Activated naive CD4-positive, alpha-beta T cell treated with anti-CD3 and anti-CD28 coated beads for 36 hours (primary cell): ENCODE measurements at regions of chr19 and their contacts with region 1.

Region 1: GRCh38 chr19:55258828-55259539 is at the start of gene PPP6R1:
- DNase-seq: peak; percentile 95
- H3K4me3 Mint-ChIP-seq: peak within 1 kb of the TSS; percentile 88
- H3K27ac Mint-ChIP-seq: peak within 1 kb of the TSS; percentile 99
- H3K4me1 Mint-ChIP-seq: peaks cover 16% of the 10 kb centered on the region
- H3K27me3 Mint-ChIP-seq: no peaks in the 10 kb centered on the region
- total RNA-seq, gene PPP6R1: 166 to 174 TPM

Region 2: DNA sequence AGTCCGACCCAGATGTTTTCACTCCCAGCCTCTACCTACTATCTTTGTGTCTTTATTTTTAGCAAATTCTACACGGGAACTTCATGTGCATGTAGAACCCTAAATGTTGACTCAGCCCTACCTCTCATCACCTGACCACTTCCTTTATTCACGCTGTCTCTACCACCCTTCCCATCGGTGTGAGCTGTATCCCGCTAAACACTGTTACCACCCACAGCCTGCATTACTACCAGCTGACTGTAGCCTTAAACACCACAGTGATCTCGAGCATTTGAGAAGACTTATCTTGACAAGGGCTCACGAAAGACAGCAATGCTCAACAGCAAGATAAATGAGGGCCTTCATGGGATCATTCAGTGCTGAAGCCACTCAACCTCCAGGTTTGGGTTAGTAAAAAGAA is 337.9 kb before region 1 on chr19:
- CTCF ChIA-PET with region 1: no interaction called
- intact Hi-C with region 1: no loop called
- DNase-seq: no peak
- H3K4me3 Mint-ChIP-seq: no peak overlapping the region
- H3K27ac Mint-ChIP-seq: no peak overlapping the region
- H3K4me1 Mint-ChIP-seq: no peaks in the 10 kb centered on the region
- H3K27me3 Mint-ChIP-seq: peaks cover 5% of the 10 kb centered on the region

Region 3: DNA sequence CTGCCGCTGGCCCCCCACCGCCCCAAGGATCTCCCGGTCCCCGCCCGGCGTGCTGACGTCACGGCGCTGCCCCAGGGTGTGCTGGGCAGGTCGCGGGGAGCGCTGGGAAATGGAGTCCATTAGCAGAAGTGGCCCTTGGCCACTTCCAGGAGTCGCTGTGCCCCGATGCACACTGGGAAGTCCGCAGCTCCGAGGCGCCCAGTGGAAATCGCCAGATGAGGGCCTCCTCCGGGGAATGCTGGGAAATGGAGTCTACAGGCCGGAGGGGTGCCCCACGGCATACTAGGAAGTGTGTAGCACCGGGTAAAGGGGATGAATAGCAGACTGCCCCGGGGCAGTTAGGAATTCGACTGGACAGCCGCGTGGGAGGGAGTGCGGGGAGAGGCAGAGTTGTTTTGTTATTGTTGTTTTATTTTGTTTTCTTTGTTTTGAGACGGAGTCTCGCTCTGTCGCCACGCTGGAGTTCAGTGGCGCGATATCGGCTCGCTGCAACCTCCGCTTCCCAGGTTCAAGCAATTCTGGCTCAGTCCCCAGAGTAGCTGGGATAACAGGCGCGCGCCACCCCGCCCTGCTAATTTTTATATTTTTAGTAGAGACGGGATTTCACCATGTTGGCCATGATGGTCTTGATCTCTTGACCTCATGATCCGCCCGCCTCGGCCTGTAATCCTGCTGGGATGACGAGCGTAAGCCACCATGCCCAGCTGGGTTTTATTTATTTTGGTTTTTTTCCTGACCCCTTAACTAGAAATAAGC is 141.2 kb before region 1 on chr19 and contains the start of gene PPP1R12C:
- CTCF ChIA-PET with region 1: interaction called, 3 read pairs
- intact Hi-C with region 1: loop called (anchors 1 kb)
- DNase-seq: peak; percentile 99
- H3K4me3 Mint-ChIP-seq: peak within 1 kb of the TSS; percentile 98
- H3K27ac Mint-ChIP-seq: peak within 1 kb of the TSS; percentile 90
- H3K4me1 Mint-ChIP-seq: peaks cover 23% of the 10 kb centered on the region
- H3K27me3 Mint-ChIP-seq: peaks cover 2% of the 10 kb centered on the region
- total RNA-seq, gene PPP1R12C: 41.2 to 42.1 TPM

Region 4: DNA sequence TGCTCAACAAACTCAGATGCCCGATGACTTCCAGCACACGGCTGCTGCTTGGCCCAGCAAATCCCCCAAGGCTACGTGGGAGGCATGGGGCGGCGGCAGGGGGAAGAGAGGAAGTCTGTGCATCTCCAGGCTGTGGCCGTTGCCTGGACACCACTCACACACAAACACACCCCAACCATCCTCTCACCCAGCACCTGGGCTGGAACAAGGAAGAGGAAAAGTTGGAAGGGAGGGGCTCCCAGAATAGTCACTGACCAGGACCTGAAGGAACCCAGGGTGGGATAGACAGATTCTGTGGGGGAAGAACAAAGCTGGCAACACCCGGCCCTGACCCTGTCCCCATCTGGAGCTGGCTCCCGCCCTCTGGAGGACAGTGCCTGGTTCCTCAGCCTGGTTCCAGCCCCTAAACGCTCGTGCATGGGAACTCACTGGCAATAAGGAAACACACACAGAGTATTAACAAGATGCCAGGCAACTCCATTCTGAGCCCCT is 11.3 kb before region 1 on chr19:
- CTCF ChIA-PET with region 1: no interaction called
- intact Hi-C with region 1: no loop called
- DNase-seq: no peak
- H3K4me3 Mint-ChIP-seq: no peak overlapping the region
- H3K27ac Mint-ChIP-seq: peak overlapping the region; percentile 24
- H3K4me1 Mint-ChIP-seq: peaks cover 37% of the 10 kb centered on the region
- H3K27me3 Mint-ChIP-seq: no peaks in the 10 kb centered on the region

Region 5: GRCh38 chr19:55279770-55280643 is 21.0 kb after region 1 on chr19 and contains the start of gene HSPBP1:
- CTCF ChIA-PET with region 1: no interaction called
- intact Hi-C with region 1: loop called (anchors 1 kb)
- DNase-seq: peak; percentile 97
- H3K4me3 Mint-ChIP-seq: peak within 1 kb of the TSS; percentile 100
- H3K27ac Mint-ChIP-seq: peak within 1 kb of the TSS; percentile 93
- H3K4me1 Mint-ChIP-seq: peaks cover 28% of the 10 kb centered on the region
- H3K27me3 Mint-ChIP-seq: no peaks in the 10 kb centered on the region
- total RNA-seq, gene HSPBP1: 44.3 to 45.0 TPM

Region 6: GRCh38 chr19:55385740-55386529 is 127.0 kb after region 1 on chr19 and contains the start of gene RPL28:
- CTCF ChIA-PET with region 1: no interaction called
- intact Hi-C with region 1: loop called (anchors 1 kb)
- DNase-seq: peak; percentile 99
- H3K4me3 Mint-ChIP-seq: peak within 1 kb of the TSS; percentile 100
- H3K27ac Mint-ChIP-seq: peak within 1 kb of the TSS; percentile 97
- H3K4me1 Mint-ChIP-seq: peaks cover 59% of the 10 kb centered on the region
- H3K27me3 Mint-ChIP-seq: no peaks in the 10 kb centered on the region
- total RNA-seq, gene RPL28: 3,327 to 3,354 TPM

Region 7: GRCh38 chr19:55476100-55476775 is 217.3 kb after region 1 on chr19 and contains the start of gene ZNF628:
- CTCF ChIA-PET with region 1: no interaction called
- intact Hi-C with region 1: loop called (anchors 1 kb)
- DNase-seq: peak; percentile 99
- H3K4me3 Mint-ChIP-seq: peak within 1 kb of the TSS; percentile 90
- H3K27ac Mint-ChIP-seq: peak within 1 kb of the TSS; percentile 90
- H3K4me1 Mint-ChIP-seq: peaks cover 30% of the 10 kb centered on the region
- H3K27me3 Mint-ChIP-seq: no peaks in the 10 kb centered on the region
- total RNA-seq, gene ZNF628: 6.0 to 6.1 TPM

Region 8: DNA sequence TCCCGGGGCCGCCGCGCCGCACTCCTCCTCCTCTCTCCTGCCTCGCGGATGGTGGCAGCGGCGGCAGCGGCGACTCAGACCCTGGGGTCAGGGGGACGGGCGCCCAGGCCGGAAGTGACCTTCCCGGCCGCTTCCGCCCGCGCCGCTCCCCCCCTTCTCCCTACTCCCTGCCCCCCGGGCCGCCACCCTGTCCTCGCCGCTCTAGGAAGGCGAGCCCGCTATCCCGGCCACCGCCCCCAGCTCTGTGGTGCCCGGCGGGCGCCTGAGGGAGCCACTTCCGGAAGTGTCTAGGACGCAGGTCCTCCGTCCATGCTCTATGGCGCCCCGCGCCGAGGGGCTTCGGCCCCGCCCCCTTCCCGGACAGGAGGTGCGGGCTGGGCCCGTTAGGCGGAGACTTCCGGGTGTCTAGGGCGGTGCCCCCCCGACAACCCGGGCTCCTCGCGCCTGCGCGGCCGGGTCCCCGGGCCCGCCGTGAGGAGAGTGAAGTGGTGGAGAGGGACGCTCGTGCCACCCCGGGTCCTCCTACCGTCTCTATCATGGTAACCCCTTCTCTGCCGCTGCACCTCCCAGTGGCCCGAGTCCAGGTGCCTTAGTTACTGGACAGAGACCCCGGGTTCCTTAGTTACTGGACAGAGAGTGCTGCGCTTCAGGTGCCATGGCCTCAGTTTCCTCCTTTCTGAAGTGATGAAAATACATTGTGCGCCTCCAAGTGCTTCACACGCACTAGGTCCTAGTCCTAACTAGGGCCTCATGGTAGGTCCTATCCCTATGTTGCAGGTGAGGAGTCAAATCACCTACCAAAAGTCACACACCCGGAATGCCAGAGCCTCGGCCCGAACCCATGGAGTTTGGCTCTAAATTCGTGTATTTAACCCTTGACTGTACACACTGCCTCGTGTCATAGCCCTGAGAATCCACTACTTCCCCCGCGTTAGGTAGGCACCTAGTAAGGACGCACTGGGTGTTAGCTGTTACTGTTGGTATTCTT is 862.5 kb after region 1 on chr19 and contains the start of gene ZNF787:
- CTCF ChIA-PET with region 1: no interaction called
- intact Hi-C with region 1: loop called (anchors 5 kb)
- DNase-seq: peak; percentile 95
- H3K4me3 Mint-ChIP-seq: peak within 1 kb of the TSS; percentile 86
- H3K27ac Mint-ChIP-seq: peak within 1 kb of the TSS; percentile 94
- H3K4me1 Mint-ChIP-seq: peaks cover 52% of the 10 kb centered on the region
- H3K27me3 Mint-ChIP-seq: no peaks in the 10 kb centered on the region
- total RNA-seq, gene ZNF787: 24.2 to 26.1 TPM